ENCODE measurements at regions of chr2 and their contacts with region 1.

Region 1: GRCh38 chr2:219245148-219245898 is at the starts of genes GLB1L and STK16:
- DNase-seq: peak; percentile 96

Region 2: DNA sequence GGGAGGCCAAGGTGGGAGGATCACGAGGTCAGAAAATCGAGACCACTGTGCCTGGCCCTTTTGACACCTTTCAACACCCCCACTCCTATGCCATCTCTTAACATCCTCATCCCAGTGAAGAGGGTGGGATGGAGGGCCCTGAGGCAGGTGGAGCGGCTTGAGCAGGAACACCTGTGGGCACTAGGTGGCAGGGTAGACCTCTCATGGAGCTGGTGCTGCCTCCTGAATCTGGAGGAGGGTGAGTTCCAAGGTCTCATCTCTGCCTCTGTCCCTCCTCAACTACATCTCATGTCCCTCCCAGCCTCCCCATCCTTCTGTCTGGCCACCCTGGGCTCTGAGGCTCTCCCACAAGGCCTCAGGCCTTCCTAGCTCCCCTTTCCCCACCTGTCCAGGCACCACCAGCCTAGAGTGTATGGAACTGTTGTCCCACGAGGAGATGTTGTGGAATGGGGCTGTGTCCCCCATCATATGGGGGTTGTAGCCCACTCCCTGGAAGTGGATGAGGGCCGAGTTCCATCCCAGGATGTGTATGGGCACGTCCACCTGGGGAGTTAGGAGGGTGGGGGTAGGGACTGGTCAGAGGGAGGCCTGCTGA is 235.1 kb before region 1 on chr2:
- CTCF ChIA-PET with region 1: no interaction called
- POLR2A ChIA-PET with region 1: no interaction called
- DNase-seq: peak; percentile 70

Region 3: GRCh38 chr2:219104107-219105035 is 141.0 kb before region 1 on chr2:
- CTCF ChIA-PET with region 1: no interaction called
- POLR2A ChIA-PET with region 1: no interaction called
- DNase-seq: peak; percentile 63

Region 4: GRCh38 chr2:219142329-219142728 is 103.0 kb before region 1 on chr2:
- CTCF ChIA-PET with region 1: no interaction called
- POLR2A ChIA-PET with region 1: no interaction called
- DNase-seq: no peak

Region 5: GRCh38 chr2:219218732-219219701 is 26.3 kb before region 1 on chr2 and contains the start of gene ABCB6:
- CTCF ChIA-PET with region 1: no interaction called
- POLR2A ChIA-PET with region 1: interaction called, 13 read pairs
- DNase-seq: peak; percentile 65

Region 6: DNA sequence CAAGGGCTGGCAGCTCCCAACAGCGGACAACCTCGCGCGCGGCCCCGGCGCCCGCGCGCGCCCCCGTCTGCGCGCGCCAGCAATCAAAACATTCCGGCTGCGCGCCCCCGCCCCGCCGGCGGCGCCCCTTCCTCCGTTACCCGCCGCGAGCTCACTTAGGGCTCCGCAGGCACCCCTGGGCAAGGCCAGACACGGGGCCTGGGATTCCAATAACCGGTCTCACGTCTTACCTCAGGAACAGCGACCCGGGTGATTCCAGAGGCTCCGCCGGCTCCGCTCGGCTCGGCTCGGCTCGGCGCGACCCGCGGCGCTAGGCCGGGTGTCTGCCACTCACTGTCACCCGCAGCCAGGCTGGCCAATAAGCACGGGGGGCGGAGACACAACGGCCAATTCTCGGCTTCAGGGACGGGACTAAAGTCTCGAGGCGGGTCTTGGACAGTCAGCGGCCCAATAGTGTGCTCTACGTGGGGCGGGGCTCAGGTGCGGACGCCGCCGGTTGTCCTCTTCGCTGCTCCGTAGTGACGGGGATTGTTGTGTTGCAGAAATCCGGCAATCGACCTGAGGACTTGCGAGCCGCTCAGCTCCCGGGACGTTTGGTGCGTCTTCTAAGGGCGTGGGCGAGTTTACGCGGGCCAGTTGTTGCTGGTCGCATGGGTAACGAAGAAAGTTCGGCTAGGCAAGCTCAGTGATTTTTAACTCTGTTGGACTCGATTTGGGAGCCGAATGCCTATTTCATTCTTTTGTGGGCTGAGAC is 15.8 kb before region 1 on chr2 and contains the starts of genes ANKZF1 and ATG9A:
- CTCF ChIA-PET with region 1: no interaction called
- POLR2A ChIA-PET with region 1: interaction called, 27 read pairs
- DNase-seq: peak; percentile 98

Region 7: GRCh38 chr2:219278655-219279516 is 33.6 kb after region 1 on chr2 and contains the start of gene DNAJB2:
- CTCF ChIA-PET with region 1: interaction called, 3 read pairs
- POLR2A ChIA-PET with region 1: interaction called, 13 read pairs
- DNase-seq: peak; percentile 98

Region 8: GRCh38 chr2:219591091-219591490 is 345.8 kb after region 1 on chr2:
- CTCF ChIA-PET with region 1: no interaction called
- POLR2A ChIA-PET with region 1: no interaction called
- DNase-seq: no peak

Measured in HEK293T (cell line).